Colonic mucosa (tissue), 4 donors: ENCODE measurements at regions of chr5 and their contacts with region 1.

Region 1: DNA sequence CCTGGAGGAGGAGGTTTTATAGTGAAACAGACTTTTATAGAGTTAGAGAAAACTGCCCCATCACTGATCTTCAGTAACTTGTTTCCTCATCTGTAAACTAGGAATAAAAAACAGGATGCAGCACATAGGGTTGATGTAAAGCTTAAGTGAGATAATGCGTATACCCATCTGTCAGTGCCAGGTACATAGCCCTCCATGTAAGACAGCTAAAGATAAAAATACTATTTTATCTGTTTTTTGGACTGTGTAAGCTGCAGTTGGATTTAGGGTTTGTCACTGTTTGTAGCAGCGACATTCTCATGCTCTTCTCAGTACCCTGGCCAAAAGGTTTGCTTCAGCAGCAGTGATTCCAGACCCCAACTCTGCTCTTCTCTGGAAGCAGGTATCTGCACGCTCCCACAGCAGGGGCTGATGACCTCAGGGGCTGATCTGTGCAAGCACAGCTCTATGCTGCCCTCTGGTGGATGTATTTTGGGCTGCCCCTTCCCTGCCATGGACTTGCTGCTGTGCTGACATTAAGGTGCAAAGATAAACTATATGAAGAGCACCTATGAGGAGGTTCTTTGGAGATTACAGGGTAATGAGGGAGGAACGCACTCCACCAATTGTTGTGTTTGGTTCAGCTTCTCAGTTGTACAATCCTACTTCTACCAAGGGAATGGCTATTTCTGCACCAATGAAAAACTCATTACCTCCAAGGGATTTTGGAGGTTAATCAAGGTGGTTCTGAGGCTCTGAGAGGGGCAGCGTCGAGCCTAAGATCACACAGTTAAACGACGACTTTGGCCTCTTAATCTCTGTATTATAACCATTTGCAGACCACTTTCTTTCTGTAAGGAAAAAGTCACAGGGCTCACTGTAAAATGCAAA is 13.1 kb downstream of the HMHB1 start:
- DNase-seq: peak; percentile 83
- H3K4me3 ChIP-seq: no peak overlapping the region
- H3K27ac ChIP-seq: no peak overlapping the region
- H3K4me1 ChIP-seq: no peaks in the 10 kb centered on the region
- H3K27me3 ChIP-seq: no peaks in the 10 kb centered on the region
- CTCF ChIP-seq: peak; percentile 96

Region 2: GRCh38 chr5:142922223-142922952 is 902.7 kb before region 1 on chr5:
- intact Hi-C with region 1: loop called (anchors 5 kb)
- DNase-seq: no peak
- H3K4me3 ChIP-seq: no peak overlapping the region
- H3K27ac ChIP-seq: no peak overlapping the region
- H3K4me1 ChIP-seq: no peaks in the 10 kb centered on the region
- H3K27me3 ChIP-seq: no peaks in the 10 kb centered on the region
- CTCF ChIP-seq: peak; percentile 19

Region 3: GRCh38 chr5:143016777-143017516 is 808.1 kb before region 1 on chr5:
- intact Hi-C with region 1: loop called (anchors 5 kb)
- DNase-seq: peak; percentile 63
- H3K4me3 ChIP-seq: no peak overlapping the region
- H3K27ac ChIP-seq: no peak overlapping the region
- H3K4me1 ChIP-seq: no peaks in the 10 kb centered on the region
- H3K27me3 ChIP-seq: no peaks in the 10 kb centered on the region
- CTCF ChIP-seq: peak; percentile 38

Region 4: DNA sequence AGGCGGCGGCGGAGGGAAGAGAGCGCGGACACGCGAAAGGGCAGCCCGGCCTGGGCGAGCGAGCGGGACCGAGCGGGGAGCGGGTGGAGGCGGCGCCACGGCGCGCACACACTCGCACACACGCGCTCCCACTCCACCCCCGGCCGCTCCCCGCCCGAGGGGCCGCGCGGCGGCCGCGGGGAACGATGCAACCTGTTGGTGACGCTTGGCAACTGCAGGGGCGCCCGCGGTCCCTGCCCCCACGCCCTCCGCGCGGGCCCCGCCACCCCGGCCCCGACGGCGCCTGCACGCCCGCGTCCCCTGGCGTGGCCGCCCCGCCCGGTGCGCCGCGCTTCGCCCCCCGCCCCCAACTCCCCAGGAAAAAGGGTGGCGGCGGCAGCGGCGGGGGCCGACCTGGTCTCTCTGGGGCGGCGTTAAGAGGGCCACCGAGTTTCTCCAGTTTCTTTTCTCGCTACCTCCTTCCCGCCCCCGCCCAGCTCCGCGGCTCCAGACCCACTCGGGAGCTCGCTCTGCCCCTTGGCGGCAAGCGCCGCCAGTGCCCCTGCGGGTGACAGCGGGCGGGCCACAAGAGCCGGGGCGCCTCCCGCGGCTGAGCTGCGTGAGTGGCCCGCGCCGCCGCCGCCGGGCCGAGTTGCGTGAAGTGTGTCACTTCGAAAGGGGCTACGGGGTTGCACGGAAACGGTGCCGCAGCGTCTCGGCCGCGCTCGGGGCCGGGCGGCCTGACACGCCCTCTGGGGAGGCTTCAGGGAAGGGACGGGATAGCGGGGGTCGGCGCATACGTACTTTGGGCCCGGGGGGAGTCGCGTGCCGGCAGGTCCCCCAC is 421.3 kb before region 1 on chr5 and contains the start of gene NR3C1:
- intact Hi-C with region 1: loop called (anchors 10 kb)
- DNase-seq: peak; percentile 81
- H3K4me3 ChIP-seq: peak within 1 kb of the TSS; percentile 58
- H3K27ac ChIP-seq: peak within 1 kb of the TSS; percentile 98
- H3K4me1 ChIP-seq: no peaks in the 10 kb centered on the region
- H3K27me3 ChIP-seq: no peaks in the 10 kb centered on the region
- CTCF ChIP-seq: peak; percentile 34
- total RNA-seq, gene NR3C1: 13.0 to 23.5 TPM

Region 5: DNA sequence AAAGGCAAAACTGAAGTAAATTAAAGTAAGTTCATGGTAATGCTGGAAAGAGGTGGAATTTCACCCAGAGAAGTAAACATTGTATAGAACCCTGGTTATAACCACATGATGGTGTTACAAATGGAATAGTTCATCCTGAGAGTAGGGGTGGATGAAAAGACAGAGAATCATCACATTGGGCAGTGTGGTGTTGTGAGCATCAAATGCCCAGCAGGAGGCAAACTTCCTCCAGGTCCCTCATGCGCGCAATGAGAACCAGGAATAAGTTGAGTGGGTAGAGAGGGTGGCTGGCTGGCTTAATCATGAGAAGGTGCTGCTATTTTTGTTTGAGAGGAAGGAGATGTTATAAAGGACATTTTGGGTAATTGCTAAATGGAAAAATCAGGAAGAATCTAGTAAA is 176.4 kb before region 1 on chr5:
- intact Hi-C with region 1: loop called (anchors 10 kb)
- DNase-seq: no peak
- H3K4me3 ChIP-seq: no peak overlapping the region
- H3K27ac ChIP-seq: no peak overlapping the region
- H3K4me1 ChIP-seq: no peaks in the 10 kb centered on the region
- H3K27me3 ChIP-seq: no peaks in the 10 kb centered on the region
- CTCF ChIP-seq: no peak

Region 6: GRCh38 chr5:143791848-143792731 is 33.0 kb before region 1 on chr5:
- intact Hi-C with region 1: no loop called
- DNase-seq: no peak
- H3K4me3 ChIP-seq: no peak overlapping the region
- H3K27ac ChIP-seq: no peak overlapping the region
- H3K4me1 ChIP-seq: no peaks in the 10 kb centered on the region
- H3K27me3 ChIP-seq: no peaks in the 10 kb centered on the region
- CTCF ChIP-seq: no peak

Region 7: GRCh38 chr5:143886651-143887638 is 61.9 kb after region 1 on chr5:
- intact Hi-C with region 1: no loop called
- DNase-seq: no peak
- H3K4me3 ChIP-seq: no peak overlapping the region
- H3K27ac ChIP-seq: no peak overlapping the region
- H3K4me1 ChIP-seq: no peaks in the 10 kb centered on the region
- H3K27me3 ChIP-seq: no peaks in the 10 kb centered on the region
- CTCF ChIP-seq: no peak

Region 8: DNA sequence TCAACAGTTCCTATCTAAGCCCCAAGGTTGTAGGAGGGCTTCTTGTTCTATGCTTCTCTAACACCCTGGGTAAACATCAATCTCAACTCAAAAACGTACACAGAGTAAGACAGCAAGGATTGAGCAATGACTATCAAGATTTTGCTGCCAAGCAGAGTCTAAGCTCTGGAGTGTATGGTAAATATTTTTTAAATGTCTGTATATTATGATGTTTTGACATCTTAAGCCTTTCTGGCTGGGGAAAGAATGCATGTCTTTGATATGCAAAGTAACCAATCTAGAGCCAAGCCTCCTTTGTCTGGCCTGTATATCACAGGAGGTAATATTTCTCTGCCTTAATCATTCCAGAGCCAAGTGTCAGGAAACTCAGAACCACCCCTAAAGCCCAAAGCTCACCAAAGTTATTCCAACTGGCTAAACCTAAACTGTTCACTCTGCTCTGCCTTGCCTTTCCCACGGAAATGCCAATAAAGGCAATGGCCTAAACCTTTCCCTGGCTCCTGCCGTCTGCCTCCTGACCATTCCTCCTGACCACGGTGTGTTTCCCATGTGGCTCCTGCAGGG is 300.2 kb after region 1 on chr5:
- intact Hi-C with region 1: no loop called
- DNase-seq: no peak
- H3K4me3 ChIP-seq: no peak overlapping the region
- H3K27ac ChIP-seq: no peak overlapping the region
- H3K4me1 ChIP-seq: no peaks in the 10 kb centered on the region
- H3K27me3 ChIP-seq: no peaks in the 10 kb centered on the region
- CTCF ChIP-seq: no peak